ENCODE measurements at regions of chr15 and their contacts with region 1.

Region 1: DNA sequence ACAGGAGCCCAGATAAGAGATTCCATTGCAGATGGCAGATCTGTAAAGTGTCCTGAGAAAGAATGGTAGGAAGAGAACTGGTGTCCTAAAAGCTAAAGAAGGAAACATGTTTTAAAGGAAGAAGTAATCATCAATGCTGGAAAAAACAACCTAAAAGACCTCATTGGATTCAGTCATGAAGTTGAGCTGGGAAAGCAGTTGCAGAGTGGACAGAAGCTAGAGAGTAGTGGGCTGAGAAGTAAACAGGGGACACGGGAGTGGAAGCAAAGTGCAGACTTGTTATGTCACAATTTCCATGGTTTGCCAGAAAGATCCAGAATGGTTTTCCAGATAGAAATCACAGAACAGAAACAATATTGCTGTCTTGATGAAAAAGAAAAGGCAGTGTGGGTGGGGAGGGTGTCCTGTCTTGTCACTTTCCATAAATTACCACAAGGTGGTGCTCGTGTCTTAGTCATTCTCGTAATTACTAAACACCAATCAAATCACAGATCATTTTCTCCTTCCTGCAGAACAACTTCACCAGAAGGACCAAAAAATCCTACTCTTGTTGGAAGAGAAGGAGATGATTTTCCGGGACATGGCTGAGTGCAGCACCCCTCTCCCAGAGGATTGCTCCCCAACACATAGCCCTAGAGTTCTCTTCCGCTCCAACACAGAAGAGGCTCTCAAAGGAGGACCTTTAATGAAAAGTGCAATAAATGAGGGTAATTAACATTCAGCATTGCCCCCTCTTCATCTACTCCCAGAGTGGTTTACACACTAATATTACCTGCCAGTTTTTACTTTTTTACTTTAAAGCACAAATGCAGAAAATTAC is 64.5 kb downstream of the KLHL25 start:
- DNase-seq: peak; percentile 61 to 68 (median 64)
- H3K4me3 ChIP-seq: no peak overlapping the region
- H3K4me3 Mint-ChIP-seq: no peak overlapping the region
- H3K27ac ChIP-seq: no peak overlapping the region
- H3K27ac Mint-ChIP-seq: peak overlapping the region; percentile 43 to 92 (median 83)
- H3K4me1 ChIP-seq: peaks cover 9% of the 10 kb centered on the region
- H3K4me1 Mint-ChIP-seq: peaks cover 9 to 16% (median 14%) of the 10 kb centered on the region in 4 donors
- H3K27me3 ChIP-seq: no peaks in the 10 kb centered on the region
- H3K27me3 Mint-ChIP-seq: no peaks in the 10 kb centered on the region

Region 2: GRCh38 chr15:85672332-85673084 is 57.7 kb before region 1 on chr15:
- CTCF ChIA-PET with region 1: no interaction called
- POLR2A ChIA-PET with region 1: no interaction called
- intact Hi-C with region 1: no loop called
- DNase-seq: no peak
- H3K4me3 ChIP-seq: no peak overlapping the region
- H3K4me3 Mint-ChIP-seq: no peak overlapping the region
- H3K27ac ChIP-seq: no peak overlapping the region
- H3K27ac Mint-ChIP-seq: peak overlapping the region in 1 of 7 donors; percentile 76
- H3K4me1 ChIP-seq: peaks cover 13% of the 10 kb centered on the region
- H3K4me1 Mint-ChIP-seq: peaks cover 10 to 30% (median 20%) of the 10 kb centered on the region in 4 donors
- H3K27me3 ChIP-seq: no peaks in the 10 kb centered on the region
- H3K27me3 Mint-ChIP-seq: no peaks in the 10 kb centered on the region

Region 3: DNA sequence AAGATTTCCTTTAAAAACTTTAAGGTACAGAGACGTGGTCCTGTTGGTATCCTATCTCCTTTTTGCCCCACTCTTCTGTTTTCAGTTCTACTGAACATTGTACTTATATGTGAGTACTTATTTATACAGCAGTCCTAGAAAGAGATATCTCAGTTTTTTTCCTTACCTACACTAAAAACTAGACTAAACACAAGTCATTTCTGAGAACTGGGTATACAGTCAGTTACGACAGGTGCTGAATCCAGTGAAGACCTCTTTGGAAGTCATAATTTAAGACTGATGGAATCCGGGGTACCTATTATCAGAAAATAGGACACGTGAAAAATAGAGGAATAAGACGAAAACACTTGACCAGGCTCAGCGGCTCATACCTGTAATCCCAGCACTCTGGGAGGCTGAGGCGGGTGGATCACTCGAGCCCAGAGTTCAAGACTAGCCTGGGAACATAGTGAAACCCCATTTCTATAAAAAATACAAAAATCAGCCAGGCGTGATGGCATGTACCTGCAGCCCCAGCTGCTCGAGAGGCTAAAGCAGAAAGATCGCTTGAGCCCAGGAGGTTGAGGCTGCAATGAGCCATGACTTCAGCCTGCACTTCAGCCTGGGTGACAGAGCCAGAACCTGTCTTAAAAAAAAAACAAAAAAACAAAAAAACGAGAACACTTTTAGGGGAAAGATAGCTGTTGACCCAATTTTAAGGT is 11.8 kb before region 1 on chr15:
- CTCF ChIA-PET with region 1: interaction called, 16 read pairs
- POLR2A ChIA-PET with region 1: interaction called, 3 read pairs
- intact Hi-C with region 1: no loop called
- DNase-seq: no peak
- H3K4me3 ChIP-seq: no peak overlapping the region
- H3K4me3 Mint-ChIP-seq: no peak overlapping the region
- H3K27ac ChIP-seq: no peak overlapping the region
- H3K27ac Mint-ChIP-seq: peak overlapping the region in 6 of 7 donors; percentile 6 to 87 (median 60)
- H3K4me1 ChIP-seq: peaks cover 36% of the 10 kb centered on the region
- H3K4me1 Mint-ChIP-seq: peaks cover 40 to 44% (median 43%) of the 10 kb centered on the region in 4 donors
- H3K27me3 ChIP-seq: no peaks in the 10 kb centered on the region
- H3K27me3 Mint-ChIP-seq: no peaks in the 10 kb centered on the region

Region 4: GRCh38 chr15:85794603-85795336 is 64.6 kb after region 1 on chr15 and contains the start of gene KLHL25:
- CTCF ChIA-PET with region 1: interaction called, 5 read pairs
- POLR2A ChIA-PET with region 1: interaction called, 3 read pairs
- intact Hi-C with region 1: loop called (anchors 2 kb)
- DNase-seq: peak; percentile 91 to 95 (median 92)
- H3K4me3 ChIP-seq: peak within 1 kb of the TSS; percentile 70 to 80
- H3K4me3 Mint-ChIP-seq: peak within 1 kb of the TSS; percentile 87 to 97 (median 93)
- H3K27ac ChIP-seq: peak within 1 kb of the TSS; percentile 65
- H3K27ac Mint-ChIP-seq: peak within 1 kb of the TSS; percentile 71 to 96 (median 91)
- H3K4me1 ChIP-seq: peaks cover 30% of the 10 kb centered on the region
- H3K4me1 Mint-ChIP-seq: peaks cover 25 to 51% (median 37%) of the 10 kb centered on the region in 4 donors
- H3K27me3 ChIP-seq: no peaks in the 10 kb centered on the region
- H3K27me3 Mint-ChIP-seq: no peaks in the 10 kb centered on the region
- total RNA-seq, gene KLHL25: 10.3 to 11.4 TPM

Region 5: DNA sequence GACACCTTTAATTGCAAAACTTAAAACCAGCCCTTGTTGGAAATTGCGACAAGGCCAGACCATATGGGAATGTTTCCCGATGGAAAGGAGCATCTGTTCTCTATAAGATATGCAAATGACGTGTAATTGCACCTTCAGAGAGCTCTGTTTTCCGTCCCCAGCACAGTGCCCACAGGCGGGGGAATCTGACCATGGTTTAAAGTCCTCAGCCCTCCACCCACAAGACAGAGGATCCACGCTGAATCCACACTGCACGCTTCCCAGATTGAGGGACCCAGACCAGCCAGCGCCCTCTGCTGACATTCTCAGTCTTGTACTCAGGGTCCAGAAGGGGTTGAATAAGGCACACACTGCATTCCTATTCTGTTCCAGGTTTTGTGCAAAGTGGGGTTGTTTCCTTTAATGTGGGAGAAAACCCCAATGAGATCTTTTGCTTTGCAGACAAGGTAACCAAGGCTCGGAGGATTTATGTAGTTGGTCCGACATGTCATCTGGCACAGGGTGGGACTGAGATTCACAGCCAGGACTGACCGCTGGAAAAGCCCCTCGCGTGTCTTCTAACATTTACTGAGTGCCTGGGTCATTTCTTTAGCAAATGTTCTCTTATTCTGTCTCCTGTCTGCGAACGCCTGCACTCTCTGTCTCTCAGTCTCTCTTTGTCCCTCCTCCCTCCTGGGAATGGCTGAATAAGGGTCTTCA is 101.4 kb after region 1 on chr15:
- CTCF ChIA-PET with region 1: interaction called, 18 read pairs
- POLR2A ChIA-PET with region 1: no interaction called
- intact Hi-C with region 1: loop called (anchors 1 kb)
- DNase-seq: peak in 4 of 5 donors; percentile 7 to 17 (median 16)
- H3K4me3 ChIP-seq: no peak overlapping the region
- H3K4me3 Mint-ChIP-seq: no peak overlapping the region
- H3K27ac ChIP-seq: no peak overlapping the region
- H3K27ac Mint-ChIP-seq: no peak overlapping the region
- H3K4me1 ChIP-seq: no peaks in the 10 kb centered on the region
- H3K4me1 Mint-ChIP-seq: no peaks in the 10 kb centered on the region
- H3K27me3 ChIP-seq: no peaks in the 10 kb centered on the region
- H3K27me3 Mint-ChIP-seq: peaks cover 0 to 2% of the 10 kb centered on the region in 2 donors

Region 6: DNA sequence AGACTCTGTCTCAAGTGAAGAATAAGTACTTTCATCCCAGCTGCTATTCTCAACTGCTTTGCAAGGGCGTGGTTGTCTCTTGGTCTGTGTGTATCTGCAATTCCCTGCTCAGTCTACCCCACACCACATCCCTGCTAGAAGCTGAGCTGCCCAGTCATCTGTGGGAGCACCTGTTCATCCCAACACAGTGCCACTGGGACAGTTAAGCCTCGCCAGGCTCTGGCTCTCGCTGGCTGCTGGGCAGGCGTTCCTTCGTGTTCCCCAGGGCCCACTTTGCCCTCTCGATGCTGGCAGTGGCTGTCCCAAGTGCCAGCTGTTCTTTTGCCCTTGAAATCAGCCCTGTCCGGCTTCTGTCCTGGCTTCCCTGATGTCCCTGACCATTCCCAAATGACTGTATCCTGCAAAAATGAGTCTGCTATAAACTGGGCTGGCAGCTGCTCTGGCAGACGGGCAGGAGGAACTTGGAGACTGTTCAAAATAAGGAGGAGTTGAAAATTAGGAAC is 156.1 kb after region 1 on chr15:
- CTCF ChIA-PET with region 1: no interaction called
- POLR2A ChIA-PET with region 1: no interaction called
- intact Hi-C with region 1: no loop called
- DNase-seq: no peak
- H3K4me3 ChIP-seq: no peak overlapping the region
- H3K4me3 Mint-ChIP-seq: peak overlapping the region in 1 of 8 donors; percentile 59
- H3K27ac ChIP-seq: no peak overlapping the region
- H3K27ac Mint-ChIP-seq: peak overlapping the region in 1 of 7 donors; percentile 74
- H3K4me1 ChIP-seq: no peaks in the 10 kb centered on the region
- H3K4me1 Mint-ChIP-seq: peaks cover 0 to 2% (median 0%) of the 10 kb centered on the region in 4 donors
- H3K27me3 ChIP-seq: no peaks in the 10 kb centered on the region
- H3K27me3 Mint-ChIP-seq: peaks cover 19 to 31% of the 10 kb centered on the region in 2 donors